Sciatic nerve (tissue), 2 donors: ENCODE measurements at regions of chr6 and their contacts with region 1.

Region 1: GRCh38 chr6:168440520-168441433 is at the start of gene SMOC2:
- DNase-seq: no peak
- ATAC-seq: peak; percentile 80
- total RNA-seq, gene SMOC2: 45.6 TPM

Region 2: GRCh38 chr6:167706313-167707109 is 734.3 kb before region 1 on chr6:
- intact Hi-C with region 1: loop called (anchors 10 kb)
- DNase-seq: no peak
- ATAC-seq: no peak

Region 3: GRCh38 chr6:168456907-168457645 is 16.3 kb after region 1 on chr6:
- intact Hi-C with region 1: no loop called
- DNase-seq: no peak
- ATAC-seq: peak; percentile 4